ENCODE measurements at regions of chr3 and their contacts with region 1.

Region 1: DNA sequence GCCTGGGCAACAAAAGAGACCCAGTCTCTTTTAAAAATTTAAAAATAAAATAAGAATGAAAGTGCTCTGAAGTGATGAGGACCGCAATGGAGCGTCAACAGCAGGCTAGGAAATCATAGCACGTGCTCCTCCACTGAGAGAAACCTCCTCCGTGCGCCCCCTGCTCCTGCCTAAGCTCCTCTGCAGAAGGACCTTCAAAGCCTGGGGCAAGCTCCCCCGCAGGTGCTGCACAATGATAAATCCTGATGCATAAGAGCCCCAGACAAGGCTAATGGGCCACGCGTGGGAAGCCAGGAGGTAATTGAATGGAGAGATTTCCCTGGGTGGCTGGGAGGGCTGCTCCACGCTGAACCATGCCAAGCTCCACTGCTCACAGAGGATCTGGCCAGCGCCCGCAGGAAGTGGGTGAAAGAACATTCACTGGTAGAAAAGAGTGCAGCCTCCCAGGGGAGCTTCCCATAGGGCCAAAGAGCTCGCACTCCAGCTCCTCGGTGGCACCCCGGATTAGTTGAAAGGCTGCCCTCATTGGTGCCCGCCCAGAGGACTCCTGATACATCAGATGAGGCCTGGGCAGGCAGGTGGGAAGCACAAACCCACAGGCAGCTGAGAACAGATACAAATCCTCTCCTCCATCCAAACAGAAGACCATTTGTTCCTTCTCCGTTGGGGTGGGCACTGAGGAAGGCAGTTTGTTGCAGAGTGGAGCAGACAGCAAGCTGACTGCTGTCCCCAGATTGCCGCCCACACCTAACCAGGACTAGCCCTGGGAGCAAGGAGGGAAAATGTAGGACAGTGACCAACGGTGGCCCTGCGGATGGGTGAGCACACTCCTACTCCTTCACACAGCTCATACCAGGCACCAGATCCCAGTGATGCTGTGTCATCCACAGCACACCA is 52.5 kb downstream of the CPN2 start:
- DNase-seq: no peak
- ATAC-seq: no peak
- H3K4me3 ChIP-seq: no peak overlapping the region
- H3K27ac ChIP-seq: no peak overlapping the region
- H3K4me1 ChIP-seq: peaks cover 7% of the 10 kb centered on the region
- H3K27me3 ChIP-seq: no peaks in the 10 kb centered on the region
- CTCF ChIP-seq: no peak

Region 2: DNA sequence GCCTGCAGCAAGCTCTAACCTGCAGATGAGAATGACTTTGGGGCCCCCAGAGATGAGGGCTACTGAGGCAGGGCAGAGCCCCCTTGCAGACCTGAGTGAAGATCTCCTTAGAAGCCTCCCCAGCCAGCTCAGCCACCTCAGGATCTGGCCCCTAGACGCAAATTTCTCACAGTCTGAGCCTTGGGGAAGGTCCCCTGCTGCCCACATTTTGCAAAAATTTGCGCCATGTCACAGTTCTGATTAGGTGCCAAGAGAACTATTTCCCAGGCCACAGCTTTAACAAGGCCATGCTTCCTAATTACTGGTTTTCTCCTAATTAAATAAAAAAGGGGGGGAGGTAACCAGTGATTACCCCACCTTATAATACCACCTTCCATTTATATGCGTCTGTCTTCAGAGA is 243.6 kb before region 1 on chr3:
- CTCF ChIA-PET with region 1: no interaction called
- POLR2A ChIA-PET with region 1: interaction called, 12 read pairs
- in situ Hi-C with region 1: no loop called
- intact Hi-C with region 1: no loop called
- DNase-seq: no peak
- ATAC-seq: no peak
- H3K4me3 ChIP-seq: no peak overlapping the region
- H3K27ac ChIP-seq: peak overlapping the region; percentile 13; the same call in 1 of the 2 replicates
- H3K4me1 ChIP-seq: peaks cover 18% of the 10 kb centered on the region
- H3K27me3 ChIP-seq: no peaks in the 10 kb centered on the region
- CTCF ChIP-seq: no peak